ENCODE measurements at regions of chr17 and their contacts with region 1.

Region 1: GRCh38 chr17:76868176-76868668 is at the start of gene MGAT5B:
- DNase-seq: peak; percentile 87
- ATAC-seq: peak; percentile 96
- H3K4me3 Mint-ChIP-seq: peak within 1 kb of the TSS; percentile 41
- H3K27ac Mint-ChIP-seq: no peak within 1 kb of the TSS
- H3K4me1 Mint-ChIP-seq: peaks cover 11% of the 10 kb centered on the region
- H3K27me3 Mint-ChIP-seq: peaks cover 23% of the 10 kb centered on the region
- total RNA-seq, gene MGAT5B: not detected

Region 2: GRCh38 chr17:77066165-77066564 is 197.9 kb after region 1 on chr17:
- CTCF ChIA-PET with region 1: interaction called, 16 read pairs
- POLR2A ChIA-PET with region 1: no interaction called
- intact Hi-C with region 1: loop called in 1 of 2 experiments (anchors 1 kb)
- DNase-seq: no peak
- ATAC-seq: no peak
- H3K4me3 Mint-ChIP-seq: no peak overlapping the region
- H3K27ac Mint-ChIP-seq: no peak overlapping the region
- H3K4me1 Mint-ChIP-seq: no peaks in the 10 kb centered on the region
- H3K27me3 Mint-ChIP-seq: peaks cover 6% of the 10 kb centered on the region

Measured in activated CD4-positive, alpha-beta T cell treated with anti-CD3 and anti-CD28 coated beads for 36 hours (primary cell).